ENCODE measurements at regions of chr1 and their contacts with region 1.

Region 1: GRCh38 chr1:65952696-65953095 is 160.0 kb downstream of the PDE4B start:
- DNase-seq: no peak
- ATAC-seq: no peak
- H3K4me3 ChIP-seq: no peak overlapping the region
- H3K27ac ChIP-seq: no peak overlapping the region
- H3K4me1 ChIP-seq: no peaks in the 10 kb centered on the region
- H3K27me3 ChIP-seq: peaks cover 0 to 2% of the 10 kb centered on the region in 2 experiments; a peak in 1 of 4 replicates
- CTCF ChIP-seq: no peak
- EP300 ChIP-seq: no peak
- POLR2A ChIP-seq: no peak
- RAD21 ChIP-seq: no peak

Region 2: GRCh38 chr1:66452162-66452561 is 499.5 kb after region 1 on chr1:
- CTCF ChIA-PET with region 1: interaction called, 32 read pairs
- POLR2A ChIA-PET with region 1: no interaction called
- RAD21 ChIA-PET with region 1: interaction called, 63 read pairs
- SMC1A ChIA-PET with region 1: interaction called, 6 read pairs
- in situ Hi-C with region 1: loop called (anchors 5 kb)
- intact Hi-C with region 1: no loop called
- DNase-seq: no peak
- ATAC-seq: peak; percentile 25; the same call in 1 of the 3 replicates
- H3K4me3 ChIP-seq: no peak overlapping the region
- H3K27ac ChIP-seq: no peak overlapping the region
- H3K4me1 ChIP-seq: no peaks in the 10 kb centered on the region
- H3K27me3 ChIP-seq: no peaks in the 10 kb centered on the region
- CTCF ChIP-seq: no peak
- EP300 ChIP-seq: no peak
- POLR2A ChIP-seq: no peak
- RAD21 ChIP-seq: no peak